Activated CD8-positive, alpha-beta T cell treated with anti-CD3 and anti-CD28 coated beads, Interleukin-2, amount 10 ng/mL, durations not matched to agents 7 days and 5 days (primary cell): ENCODE measurements at regions of chr9 and their contacts with region 1.

Region 1: GRCh38 chr9:125407974-125408900 is 146.6 kb downstream of the GAPVD1 start:
- DNase-seq: peak; percentile 82
- ATAC-seq: peak; percentile 92
- H3K4me3 Mint-ChIP-seq: peak overlapping the region; percentile 65
- H3K27ac Mint-ChIP-seq: no peak overlapping the region
- H3K4me1 Mint-ChIP-seq: peaks cover 16% of the 10 kb centered on the region
- H3K27me3 Mint-ChIP-seq: peaks cover 14% of the 10 kb centered on the region

Region 2: GRCh38 chr9:125631391-125632085 is 223.3 kb after region 1 on chr9:
- CTCF ChIA-PET with region 1: interaction called, 10 read pairs
- POLR2A ChIA-PET with region 1: no interaction called
- DNase-seq: peak; percentile 48
- ATAC-seq: peak; percentile 46
- H3K4me3 Mint-ChIP-seq: no peak overlapping the region
- H3K27ac Mint-ChIP-seq: peak overlapping the region; percentile 37
- H3K4me1 Mint-ChIP-seq: peaks cover 52% of the 10 kb centered on the region
- H3K27me3 Mint-ChIP-seq: no peaks in the 10 kb centered on the region

Region 3: DNA sequence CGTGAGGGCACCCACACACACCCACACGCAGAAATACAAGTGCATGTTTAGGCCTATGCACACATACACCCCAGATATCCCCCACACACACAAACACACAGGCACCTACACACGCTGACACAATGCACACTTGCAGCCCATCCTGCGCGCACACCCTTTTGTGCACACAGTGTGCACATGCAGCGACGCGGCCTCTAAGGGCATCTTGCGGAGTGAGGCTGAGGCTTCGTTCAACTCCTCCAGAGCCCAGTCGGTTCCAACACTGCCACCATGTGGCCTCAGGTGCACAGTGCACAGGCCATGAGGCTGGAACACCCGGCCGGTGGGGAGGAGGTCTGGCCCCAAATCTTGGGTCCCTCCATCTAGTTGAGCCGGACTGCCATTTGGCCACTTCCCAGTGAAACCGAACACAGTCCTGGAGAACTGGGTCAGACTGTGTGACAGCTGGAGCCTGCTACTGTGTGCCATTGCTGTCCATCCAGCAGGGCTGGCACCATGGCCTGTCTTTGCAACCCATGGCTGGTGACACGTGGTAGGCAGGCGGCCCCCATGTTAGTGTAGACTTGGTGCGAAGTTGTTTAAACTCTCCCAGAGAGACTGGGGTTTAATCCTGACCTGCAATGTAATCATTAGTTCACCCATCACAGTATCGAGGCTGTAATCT is 820.7 kb after region 1 on chr9:
- CTCF ChIA-PET with region 1: interaction called, 10 read pairs
- POLR2A ChIA-PET with region 1: no interaction called
- DNase-seq: peak; percentile 75
- ATAC-seq: peak; percentile 91
- H3K4me3 Mint-ChIP-seq: no peak overlapping the region
- H3K27ac Mint-ChIP-seq: no peak overlapping the region
- H3K4me1 Mint-ChIP-seq: no peaks in the 10 kb centered on the region
- H3K27me3 Mint-ChIP-seq: peaks cover 13% of the 10 kb centered on the region